AG04449 (cell line): ENCODE measurements at regions of chr16 and their contacts with region 1.

Region 1: DNA sequence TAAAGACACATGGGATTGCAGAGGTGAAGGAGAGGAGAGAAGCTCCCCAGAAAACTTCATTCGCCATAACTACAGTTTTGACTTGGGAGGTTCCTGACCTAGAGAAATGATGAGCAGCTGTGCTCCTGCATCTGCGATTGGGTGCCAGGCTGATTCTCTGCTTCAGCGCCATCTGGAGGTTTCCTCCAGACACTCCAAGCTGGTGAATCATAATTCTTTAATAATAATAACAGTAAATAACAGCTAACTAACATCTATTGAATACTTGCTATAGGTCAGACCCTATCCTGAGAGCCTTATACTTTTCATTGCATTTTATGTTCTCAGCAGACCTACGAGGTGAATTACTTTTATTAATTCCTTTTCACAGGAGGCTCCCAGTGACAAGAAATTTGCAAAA is 575.8 kb downstream of the TOX3 start:
- DNase-seq: no peak
- H3K4me3 ChIP-seq: no peak overlapping the region
- CTCF ChIP-seq: peak; percentile 45

Region 2: DNA sequence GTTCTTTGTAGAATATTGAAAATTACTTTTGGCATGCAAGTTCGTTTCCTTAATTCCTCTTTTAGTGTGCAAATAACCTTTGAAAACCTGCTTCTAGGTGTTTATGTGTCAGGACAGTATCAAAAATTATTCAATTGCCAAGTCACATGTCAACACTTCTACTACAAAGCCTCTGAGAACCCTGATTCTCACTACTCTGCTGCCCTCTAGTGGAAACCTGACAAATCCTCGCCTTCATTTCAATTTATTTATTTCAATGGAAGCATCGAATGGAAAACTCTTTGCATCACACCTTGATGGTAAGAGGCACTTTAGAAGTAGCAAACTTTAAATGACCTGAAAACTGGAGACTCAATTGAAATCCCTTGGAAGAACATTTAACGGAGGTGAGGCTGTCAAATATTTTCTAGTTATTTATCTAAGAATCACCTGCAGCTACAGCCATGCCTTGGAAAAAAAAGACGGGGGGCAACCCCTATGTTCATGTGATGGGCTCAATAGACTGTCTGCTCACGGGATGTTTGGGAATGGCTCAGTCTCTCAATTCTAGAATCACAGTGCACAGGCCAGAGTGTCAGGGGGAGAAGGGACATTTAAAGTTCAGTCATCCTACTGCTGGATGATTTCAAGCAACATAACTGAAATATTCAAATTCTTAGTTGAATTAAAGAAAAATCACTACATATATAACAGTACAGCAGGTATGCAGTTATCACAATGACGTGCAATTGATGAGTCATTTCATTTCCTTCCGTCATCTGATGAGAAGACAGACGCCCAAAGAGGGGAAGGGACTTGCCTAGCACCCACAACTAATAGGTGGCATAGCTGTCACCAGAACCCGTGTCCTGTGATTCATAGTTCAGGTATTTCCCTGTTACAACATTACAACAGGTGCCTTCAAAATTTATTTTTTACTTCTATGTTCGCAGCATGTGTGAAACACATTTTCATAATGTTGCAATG is 11.8 kb after region 1 on chr16:
- CTCF ChIA-PET with region 1: interaction called, 11 read pairs
- POLR2A ChIA-PET with region 1: no interaction called
- DNase-seq: peak; percentile 37
- H3K4me3 ChIP-seq: no peak overlapping the region
- CTCF ChIP-seq: peak; percentile 48

Region 3: DNA sequence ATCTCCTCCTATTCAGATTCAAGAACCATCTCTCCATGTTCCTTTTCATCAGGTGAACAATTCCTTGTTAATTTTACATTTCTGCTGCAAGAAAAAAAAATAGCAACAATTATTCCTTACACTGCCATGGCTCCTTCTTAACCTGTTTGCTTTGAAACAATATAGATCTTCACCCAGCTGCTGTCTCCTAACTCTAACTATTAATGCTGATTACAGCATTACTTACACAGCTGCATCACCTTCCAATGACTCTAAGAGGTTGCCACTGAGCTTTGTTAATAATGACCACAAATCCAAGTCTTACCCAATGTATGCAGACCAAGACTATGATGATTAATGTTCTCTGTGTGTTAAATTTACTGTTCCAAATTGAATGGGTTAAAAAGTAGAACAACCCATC is 34.4 kb after region 1 on chr16:
- CTCF ChIA-PET with region 1: no interaction called
- POLR2A ChIA-PET with region 1: no interaction called
- DNase-seq: no peak
- H3K4me3 ChIP-seq: no peak overlapping the region
- CTCF ChIP-seq: no peak